Activated CD4-positive, alpha-beta memory T cell treated with anti-CD3 and anti-CD28 coated beads, Interleukin-2, amount 10 ng/mL, durations not matched to agents 7 days and 5 days (primary cell): ENCODE measurements at regions of chr22 and their contacts with region 1.

Region 1: DNA sequence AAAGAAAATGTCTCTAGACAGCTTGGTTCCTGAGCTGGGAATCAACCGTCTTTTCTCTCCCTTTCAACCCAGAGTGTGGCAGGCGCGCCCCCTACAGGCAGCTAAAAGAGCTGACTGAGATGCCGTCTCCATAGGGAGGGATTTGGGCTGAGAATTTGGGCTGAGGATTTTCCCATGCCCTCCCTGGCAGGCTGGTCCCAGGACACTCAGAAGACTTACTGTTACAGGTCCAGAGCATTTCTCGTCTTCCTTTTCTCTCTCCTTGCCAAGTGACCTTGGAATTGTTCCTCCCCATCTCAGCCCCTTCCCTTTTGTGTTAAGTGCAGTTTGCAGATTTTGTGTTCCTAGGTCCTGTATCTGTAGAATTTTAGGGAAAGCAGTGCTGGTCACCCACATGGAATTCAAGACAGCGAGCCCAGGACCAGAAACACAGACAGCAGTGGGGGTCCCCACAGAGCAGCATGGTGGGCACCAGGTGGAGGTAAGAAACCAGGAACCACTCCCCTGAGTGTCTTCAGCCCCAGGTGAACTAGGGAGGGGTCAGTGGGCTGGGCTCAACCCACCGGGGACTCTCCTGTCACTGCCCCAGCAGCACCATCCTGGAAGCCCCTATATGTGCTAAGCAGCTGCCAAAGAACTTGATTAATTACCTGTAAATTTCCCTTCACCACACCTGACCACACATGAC is 9.9 kb upstream of the IGLL5 start:
- DNase-seq: peak; percentile 78
- H3K4me3 Mint-ChIP-seq: no peak overlapping the region
- H3K27ac Mint-ChIP-seq: no peak overlapping the region
- H3K4me1 Mint-ChIP-seq: no peaks in the 10 kb centered on the region
- H3K27me3 Mint-ChIP-seq: peaks cover 23% of the 10 kb centered on the region

Region 2: GRCh38 chr22:22787786-22788459 is 89.7 kb before region 1 on chr22:
- CTCF ChIA-PET with region 1: interaction called, 29 read pairs
- POLR2A ChIA-PET with region 1: no interaction called
- DNase-seq: peak; percentile 75
- H3K4me3 Mint-ChIP-seq: no peak overlapping the region
- H3K27ac Mint-ChIP-seq: peak overlapping the region; percentile 62
- H3K4me1 Mint-ChIP-seq: peaks cover 41% of the 10 kb centered on the region
- H3K27me3 Mint-ChIP-seq: peaks cover 14% of the 10 kb centered on the region

Region 3: GRCh38 chr22:22810018-22810427 is 67.6 kb before region 1 on chr22:
- CTCF ChIA-PET with region 1: interaction called, 235 read pairs
- POLR2A ChIA-PET with region 1: interaction called, 3 read pairs
- DNase-seq: peak; percentile 82
- H3K4me3 Mint-ChIP-seq: no peak overlapping the region
- H3K27ac Mint-ChIP-seq: no peak overlapping the region
- H3K4me1 Mint-ChIP-seq: peaks cover 8% of the 10 kb centered on the region
- H3K27me3 Mint-ChIP-seq: peaks cover 29% of the 10 kb centered on the region

Region 4: DNA sequence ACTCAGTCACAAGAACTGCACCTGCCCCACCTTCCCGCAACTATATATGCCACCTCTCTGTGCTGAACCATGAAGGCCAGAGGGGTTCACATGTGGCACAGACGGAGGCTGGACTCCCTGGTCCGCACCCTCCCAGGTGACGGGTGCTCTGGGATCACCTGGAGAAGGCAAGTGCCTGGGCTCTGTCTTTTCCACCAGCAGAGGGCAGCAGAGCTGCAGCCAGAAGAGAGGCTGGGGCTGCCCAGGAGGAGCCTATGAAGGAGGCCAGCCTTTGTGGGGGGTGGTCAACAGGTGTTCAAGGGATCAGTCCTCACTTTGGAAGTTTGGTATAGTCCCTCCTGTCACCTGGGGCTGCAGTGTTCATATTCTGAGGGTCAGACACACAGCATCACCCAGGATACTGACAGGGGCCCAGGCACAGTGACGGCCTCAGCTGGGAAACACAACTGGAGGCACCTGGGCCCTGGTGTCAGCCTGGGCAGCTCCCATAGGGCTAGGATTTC is 29.3 kb before region 1 on chr22:
- CTCF ChIA-PET with region 1: interaction called, 13 read pairs
- POLR2A ChIA-PET with region 1: no interaction called
- DNase-seq: peak; percentile 74
- H3K4me3 Mint-ChIP-seq: no peak overlapping the region
- H3K27ac Mint-ChIP-seq: no peak overlapping the region
- H3K4me1 Mint-ChIP-seq: peaks cover 7% of the 10 kb centered on the region
- H3K27me3 Mint-ChIP-seq: peaks cover 28% of the 10 kb centered on the region

Region 5: GRCh38 chr22:22865311-22866072 is 12.2 kb before region 1 on chr22:
- CTCF ChIA-PET with region 1: interaction called, 10 read pairs
- POLR2A ChIA-PET with region 1: no interaction called
- DNase-seq: peak; percentile 47
- H3K4me3 Mint-ChIP-seq: no peak overlapping the region
- H3K27ac Mint-ChIP-seq: peak overlapping the region; percentile 53
- H3K4me1 Mint-ChIP-seq: peaks cover 33% of the 10 kb centered on the region
- H3K27me3 Mint-ChIP-seq: peaks cover 37% of the 10 kb centered on the region

Region 6: GRCh38 chr22:22893077-22893805 is 15.6 kb after region 1 on chr22:
- CTCF ChIA-PET with region 1: no interaction called
- POLR2A ChIA-PET with region 1: no interaction called
- DNase-seq: no peak
- H3K4me3 Mint-ChIP-seq: no peak overlapping the region
- H3K27ac Mint-ChIP-seq: no peak overlapping the region
- H3K4me1 Mint-ChIP-seq: peaks cover 2% of the 10 kb centered on the region
- H3K27me3 Mint-ChIP-seq: peaks cover 75% of the 10 kb centered on the region